ENCODE measurements at regions of chr1 and their contacts with region 1.

Region 1: DNA sequence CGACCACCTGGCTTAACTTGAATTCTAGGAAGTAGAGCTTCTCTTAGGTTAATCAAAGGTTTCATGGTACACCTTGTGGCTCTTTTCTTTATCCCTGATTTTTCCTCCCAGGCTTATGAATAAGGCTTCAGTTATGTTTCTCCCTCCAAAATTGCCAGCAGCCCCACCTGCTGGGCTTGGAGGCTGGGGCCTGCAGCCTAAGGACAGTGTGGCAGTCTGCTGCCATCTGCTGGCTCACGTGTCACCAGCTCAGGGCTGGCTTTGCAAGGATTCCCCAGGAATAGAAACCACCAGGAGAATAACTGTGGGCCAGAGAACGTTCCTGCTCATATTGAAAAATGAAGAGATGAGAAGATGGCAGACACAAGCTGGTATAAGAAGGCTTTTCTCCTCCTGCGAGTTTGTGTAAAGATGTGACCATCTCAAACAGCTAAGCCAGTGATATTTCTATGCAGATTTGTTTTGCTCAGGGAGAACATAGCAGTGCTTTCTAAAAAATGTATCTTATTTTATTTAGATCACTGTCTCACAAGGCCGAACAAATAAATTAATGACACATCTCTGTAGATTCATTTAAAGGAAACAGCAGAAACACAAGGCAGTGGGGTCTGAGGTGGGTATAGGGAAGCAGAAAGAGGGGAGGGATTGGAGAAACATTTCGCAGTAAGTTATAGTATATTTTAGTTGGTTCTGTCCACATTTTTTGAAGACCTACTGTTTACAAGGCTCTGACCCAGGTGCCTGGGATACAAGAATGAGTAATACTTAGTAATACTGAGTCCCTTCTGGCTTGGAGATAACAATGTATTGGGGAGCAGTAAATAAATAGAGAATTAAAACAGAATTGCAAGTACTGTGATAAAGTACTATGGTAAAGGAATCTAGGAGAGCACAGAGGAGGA is 291.1 kb upstream of the SGIP1 start:
- DNase-seq: peak; percentile 82 to 94 (median 88)
- H3K4me3 ChIP-seq: no peak overlapping the region
- H3K27ac ChIP-seq: no peak overlapping the region
- H3K4me1 ChIP-seq: no peaks in the 10 kb centered on the region
- H3K27me3 ChIP-seq: no peaks in the 10 kb centered on the region
- CTCF ChIP-seq: peak; percentile 93 to 99 (median 98)
- POLR2A ChIP-seq: no peak

Region 2: DNA sequence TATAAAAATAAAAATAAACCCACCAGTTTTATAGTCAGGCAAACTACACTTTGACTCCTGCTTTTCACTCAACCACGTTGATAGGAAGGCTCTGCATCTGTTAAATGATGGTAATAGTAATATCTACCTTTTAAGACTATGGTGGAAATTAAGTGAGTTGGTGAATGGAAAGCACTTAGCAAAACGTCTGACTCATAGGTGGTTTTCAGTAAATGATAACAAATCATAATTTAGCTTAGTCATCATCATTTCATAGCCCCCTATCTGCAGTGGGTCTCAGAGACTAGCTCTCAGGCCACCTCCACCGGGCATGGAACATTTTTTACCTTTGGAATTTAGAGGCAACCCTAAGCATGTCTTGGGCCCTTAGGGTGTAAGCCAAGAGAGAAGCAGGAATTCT is 290.2 kb before region 1 on chr1:
- intact Hi-C with region 1: loop called in 1 of 2 experiments (anchors 5 kb)
- DNase-seq: no peak
- H3K4me3 ChIP-seq: no peak overlapping the region
- H3K27ac ChIP-seq: no peak overlapping the region
- H3K4me1 ChIP-seq: no peaks in the 10 kb centered on the region
- H3K27me3 ChIP-seq: no peaks in the 10 kb centered on the region
- CTCF ChIP-seq: no peak
- POLR2A ChIP-seq: no peak

Region 3: DNA sequence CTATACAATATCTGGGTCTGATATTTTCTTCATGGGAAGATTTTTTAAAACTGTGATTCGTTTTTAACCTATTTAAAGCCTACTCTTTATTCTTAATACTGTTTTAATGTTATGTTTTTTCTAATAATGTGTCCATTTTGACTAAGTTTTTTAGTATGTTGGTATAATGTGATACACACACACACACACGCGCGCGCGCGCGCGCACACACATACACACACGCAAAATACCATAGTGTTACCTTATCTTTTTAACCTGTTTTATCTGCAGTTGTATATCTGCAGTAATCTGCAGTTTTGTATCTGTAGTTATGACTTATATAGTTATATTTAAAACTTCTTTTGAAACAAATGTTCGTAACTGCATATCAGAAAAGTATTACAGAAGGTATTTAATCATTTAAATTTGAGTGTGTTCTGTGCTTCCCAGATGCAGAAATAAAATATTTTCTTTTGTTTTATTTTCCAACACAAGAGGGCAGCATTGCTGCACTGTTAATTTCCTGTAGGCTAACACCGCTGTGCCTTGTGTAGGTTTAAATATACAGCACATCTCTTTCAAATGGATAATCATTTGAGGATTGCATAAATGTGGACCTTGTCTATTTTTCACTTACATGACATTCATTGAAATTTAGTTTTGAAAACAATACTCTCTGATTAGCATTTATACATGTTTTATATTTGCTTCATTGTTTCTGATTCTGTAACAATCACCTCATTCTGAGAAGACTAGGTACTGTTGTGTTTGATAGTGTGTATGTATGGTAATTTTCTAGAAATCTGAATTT is 284.1 kb before region 1 on chr1:
- intact Hi-C with region 1: loop called (anchors 5 kb)
- DNase-seq: peak in 2 of 7 donors; percentile 15 to 24
- H3K4me3 ChIP-seq: no peak overlapping the region
- H3K27ac ChIP-seq: no peak overlapping the region
- H3K4me1 ChIP-seq: no peaks in the 10 kb centered on the region
- H3K27me3 ChIP-seq: no peaks in the 10 kb centered on the region
- CTCF ChIP-seq: peak; percentile 62 to 89 (median 76)
- POLR2A ChIP-seq: no peak

Measured in adrenal gland (tissue), 19 donors.